ENCODE measurements at regions of chr11 and their contacts with region 1.

Region 1: DNA sequence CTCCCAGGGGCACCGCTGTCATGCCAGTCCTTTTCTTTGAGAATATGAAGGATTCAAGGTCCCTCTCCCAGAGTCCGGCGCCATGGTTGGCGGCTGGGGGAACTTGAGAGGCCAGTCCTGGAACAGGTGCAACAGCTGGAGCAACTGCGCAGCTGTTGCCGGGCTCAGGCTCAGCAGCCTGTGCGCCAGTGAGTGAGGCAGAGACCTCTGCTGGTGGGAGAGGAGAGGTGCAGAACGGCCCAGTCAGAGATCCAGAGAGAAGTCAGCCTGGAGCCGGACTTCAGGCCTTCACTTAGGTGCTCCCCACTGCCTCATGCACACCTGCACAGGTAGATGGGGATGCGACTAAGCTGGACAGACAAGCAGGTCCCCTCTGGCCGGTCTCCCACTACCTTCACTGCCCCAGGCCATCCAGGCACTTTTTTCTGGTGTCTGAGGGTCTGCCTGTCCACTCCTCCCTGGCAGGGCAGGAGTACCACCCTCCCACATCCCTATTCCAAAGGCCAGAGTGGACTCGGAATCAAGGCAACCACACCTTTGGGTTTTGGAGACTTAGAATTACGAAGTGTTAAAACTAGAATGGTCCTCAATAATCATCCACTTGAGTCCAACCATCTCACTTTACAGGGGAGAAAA is 4.6 kb downstream of the CHRDL2 start:
- DNase-seq: no peak
- H3K4me3 ChIP-seq: no peak overlapping the region
- H3K27me3 ChIP-seq: peaks cover 40% of the 10 kb centered on the region
- CTCF ChIP-seq: peak; percentile 99

Region 2: GRCh38 chr11:74611369-74611861 is 115.2 kb before region 1 on chr11:
- CTCF ChIA-PET with region 1: interaction called, 70 read pairs
- POLR2A ChIA-PET with region 1: no interaction called
- DNase-seq: peak; percentile 86
- H3K4me3 ChIP-seq: no peak overlapping the region
- H3K27me3 ChIP-seq: no peaks in the 10 kb centered on the region
- CTCF ChIP-seq: peak; percentile 54

Region 3: DNA sequence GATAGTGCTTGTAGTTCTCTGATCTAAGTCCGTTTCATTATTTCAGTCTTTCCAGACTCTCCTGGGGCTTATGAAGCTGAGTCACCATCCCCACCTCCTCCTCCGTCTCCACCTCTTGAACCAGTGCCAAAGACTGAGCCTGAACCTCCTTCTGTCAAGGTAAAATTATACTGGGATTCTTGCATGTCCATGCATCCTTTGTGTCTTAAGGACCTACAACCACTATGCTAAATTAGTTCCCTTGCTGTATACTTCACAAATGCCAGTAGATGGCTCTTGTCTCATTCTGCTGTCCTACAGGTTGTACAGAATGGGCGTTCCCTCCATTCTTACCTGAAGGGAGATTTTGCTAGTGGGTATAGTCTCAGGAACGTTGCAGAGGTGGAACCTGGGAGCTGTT is 92.1 kb before region 1 on chr11:
- CTCF ChIA-PET with region 1: interaction called, 40 read pairs
- POLR2A ChIA-PET with region 1: no interaction called
- DNase-seq: no peak
- H3K4me3 ChIP-seq: no peak overlapping the region
- H3K27me3 ChIP-seq: no peaks in the 10 kb centered on the region
- CTCF ChIP-seq: peak; percentile 49

Region 4: GRCh38 chr11:74702383-74703007 is 24.2 kb before region 1 on chr11:
- CTCF ChIA-PET with region 1: interaction called, 76 read pairs
- POLR2A ChIA-PET with region 1: no interaction called
- DNase-seq: no peak
- H3K4me3 ChIP-seq: no peak overlapping the region
- H3K27me3 ChIP-seq: no peaks in the 10 kb centered on the region
- CTCF ChIP-seq: peak; percentile 98

Region 5: GRCh38 chr11:74739546-74740270 is 13.0 kb after region 1 on chr11:
- CTCF ChIA-PET with region 1: interaction called, 50 read pairs
- POLR2A ChIA-PET with region 1: no interaction called
- DNase-seq: no peak
- H3K4me3 ChIP-seq: no peak overlapping the region
- H3K27me3 ChIP-seq: peaks cover 9% of the 10 kb centered on the region
- CTCF ChIP-seq: peak; percentile 91

Region 6: DNA sequence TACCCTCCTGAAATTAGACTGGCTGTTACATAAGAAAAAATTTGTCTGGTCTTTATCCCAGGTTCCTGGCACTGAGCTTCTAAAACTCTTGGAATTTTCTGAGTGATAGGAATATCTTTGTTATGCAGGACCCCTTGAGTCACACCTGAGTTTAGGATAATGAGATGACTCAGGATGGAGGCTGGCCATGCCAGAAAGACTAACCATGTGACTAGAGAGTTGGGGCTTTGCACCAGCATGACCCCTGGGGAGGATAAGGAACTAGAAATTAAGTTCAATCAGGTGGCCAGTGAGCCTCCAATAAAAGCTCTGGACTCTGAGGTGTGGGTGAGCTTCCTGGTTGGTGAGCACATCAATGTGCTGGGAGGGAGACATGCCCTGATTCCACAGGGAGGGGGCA is 134.1 kb after region 1 on chr11:
- CTCF ChIA-PET with region 1: no interaction called
- POLR2A ChIA-PET with region 1: no interaction called
- DNase-seq: no peak
- H3K4me3 ChIP-seq: no peak overlapping the region
- H3K27me3 ChIP-seq: no peaks in the 10 kb centered on the region
- CTCF ChIP-seq: no peak

Measured in BJ (cell line).